ENCODE measurements at regions of chr9 and their contacts with region 1.

Region 1: DNA sequence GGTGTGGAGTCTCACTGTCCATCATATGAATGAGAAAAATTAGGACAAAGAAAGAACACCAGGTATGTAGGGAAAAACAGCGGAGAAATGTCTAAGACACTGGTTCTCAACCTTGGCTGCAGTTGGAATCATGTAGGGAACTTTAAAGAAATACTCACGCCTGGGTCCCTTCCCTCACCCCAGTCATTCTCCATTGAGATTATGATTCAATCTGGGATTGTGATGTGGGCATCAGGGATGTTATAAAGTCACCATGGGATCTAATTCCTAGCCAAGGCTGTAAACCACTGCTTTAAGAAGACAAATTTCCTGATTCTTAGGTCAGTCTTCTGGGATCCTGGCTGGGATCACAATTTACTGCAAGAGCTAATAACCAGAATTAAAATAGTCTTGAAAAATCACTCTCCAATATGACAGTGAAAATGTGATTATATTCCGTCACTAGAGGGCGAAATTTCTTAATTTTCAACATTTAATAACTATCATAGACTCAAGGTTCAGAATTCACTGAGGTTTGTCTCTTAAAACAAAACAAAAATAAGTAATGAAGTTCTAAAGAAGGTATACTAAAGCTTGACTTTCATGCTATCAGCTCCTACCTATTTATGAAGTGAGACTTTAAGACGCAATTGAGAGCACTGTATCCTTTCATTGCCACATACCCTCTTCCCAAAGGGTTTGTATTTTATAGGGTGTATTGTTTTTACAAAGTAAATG is 60.5 kb downstream of the GLDC start:
- DNase-seq: no peak
- ATAC-seq: peak; percentile 35 to 60 (median 49)
- H3K4me3 ChIP-seq: no peak overlapping the region
- H3K27ac ChIP-seq: no peak overlapping the region
- H3K4me1 ChIP-seq: no peaks in the 10 kb centered on the region
- H3K27me3 ChIP-seq: no peaks in the 10 kb centered on the region
- CTCF ChIP-seq: peak; percentile 34 to 51 (median 46)
- POLR2A ChIP-seq: no peak

Region 2: GRCh38 chr9:6272229-6272598 is 312.8 kb before region 1 on chr9:
- intact Hi-C with region 1: no loop called
- DNase-seq: peak in 1 of 3 donors; percentile 64
- ATAC-seq: peak; percentile 96 to 98 (median 98)
- H3K4me3 ChIP-seq: no peak overlapping the region
- H3K27ac ChIP-seq: peak overlapping the region; percentile 41 to 85 (median 83)
- H3K4me1 ChIP-seq: peaks cover 0 to 28% (median 13%) of the 10 kb centered on the region in 4 donors
- H3K27me3 ChIP-seq: no peaks in the 10 kb centered on the region
- CTCF ChIP-seq: no peak
- POLR2A ChIP-seq: no peak

Region 3: GRCh38 chr9:6681147-6681956 is 96.3 kb after region 1 on chr9:
- intact Hi-C with region 1: loop called in 1 of 2 experiments (anchors 10 kb)
- DNase-seq: peak; percentile 98
- ATAC-seq: peak; percentile 88 to 95 (median 90)
- H3K4me3 ChIP-seq: peak overlapping the region; percentile 68 to 80 (median 70)
- H3K27ac ChIP-seq: peak overlapping the region; percentile 94 to 99 (median 96)
- H3K4me1 ChIP-seq: peaks cover 0 to 45% (median 15%) of the 10 kb centered on the region in 4 donors
- H3K27me3 ChIP-seq: no peaks in the 10 kb centered on the region
- CTCF ChIP-seq: peak in 1 of 4 donors; percentile 9
- POLR2A ChIP-seq: peak; percentile 97